ENCODE measurements at regions of chr5 and their contacts with region 1.

Region 1: GRCh38 chr5:67149951-67150523 is 46.6 kb downstream of the CD180 start:
- DNase-seq: no peak
- ATAC-seq: peak in 1 of 2 experiments; percentile 63; a peak in 2 of 6 replicates
- H3K4me3 ChIP-seq: no peak overlapping the region
- H3K27ac ChIP-seq: no peak overlapping the region
- H3K4me1 ChIP-seq: no peaks in the 10 kb centered on the region
- CTCF ChIP-seq: peak; percentile 59
- EP300 ChIP-seq: no peak
- POLR2A ChIP-seq: no peak
- RAD21 ChIP-seq: peak; percentile 70 to 78

Region 2: GRCh38 chr5:66807743-66808142 is 342.3 kb before region 1 on chr5:
- CTCF ChIA-PET with region 1: interaction called, 31 read pairs
- POLR2A ChIA-PET with region 1: no interaction called
- DNase-seq: peak; percentile 66 to 73
- ATAC-seq: peak; percentile 98
- H3K4me3 ChIP-seq: no peak overlapping the region
- H3K27ac ChIP-seq: peak overlapping the region in 1 of 2 experiments; percentile 65; a peak in 4 of 6 replicates
- H3K4me1 ChIP-seq: peaks cover 5% of the 10 kb centered on the region
- CTCF ChIP-seq: peak; percentile 78
- EP300 ChIP-seq: no peak
- POLR2A ChIP-seq: no peak
- RAD21 ChIP-seq: peak; percentile 87 to 88

Region 3: DNA sequence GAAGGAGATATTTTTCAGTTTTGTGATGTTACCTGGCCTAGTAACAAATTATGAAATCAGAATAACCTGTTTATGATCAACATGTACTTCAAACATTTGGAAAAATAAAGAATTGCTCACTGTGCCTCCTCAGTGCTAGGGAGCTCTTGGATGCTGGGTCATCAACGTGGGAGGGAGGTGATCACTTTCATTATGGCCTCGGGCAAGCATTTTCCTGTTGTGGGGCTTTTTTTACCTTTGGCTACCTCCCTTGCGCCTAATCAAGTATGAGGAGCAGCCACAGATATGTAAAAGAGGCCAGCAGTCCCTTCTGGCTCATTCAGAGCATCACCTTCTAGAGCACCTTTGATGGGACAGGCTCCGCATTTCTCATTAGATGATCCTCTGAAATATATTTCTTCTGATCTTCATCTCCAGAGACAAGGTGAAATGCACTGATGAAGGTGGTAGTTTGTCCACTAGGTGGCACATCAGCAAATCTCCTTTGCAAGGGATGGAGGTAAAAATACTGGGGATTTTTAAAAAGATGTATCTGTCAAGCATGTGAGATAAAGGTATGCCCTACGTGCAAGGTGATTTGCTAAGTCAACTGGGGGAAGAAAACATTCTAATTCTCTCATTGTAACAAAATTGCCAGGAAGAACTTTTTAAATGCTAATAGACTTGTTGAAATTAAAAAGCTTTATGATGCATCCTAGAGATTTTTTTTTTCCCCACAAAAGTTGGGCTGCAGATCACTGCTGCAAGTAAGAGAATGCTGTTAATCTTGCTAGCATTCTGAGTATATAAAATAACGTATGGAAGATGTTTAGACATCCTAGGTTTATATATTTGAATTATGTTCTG is 335.7 kb before region 1 on chr5:
- CTCF ChIA-PET with region 1: interaction called, 23 read pairs
- POLR2A ChIA-PET with region 1: no interaction called
- DNase-seq: peak; percentile 59 to 66
- ATAC-seq: peak; percentile 85 to 90; a peak in 5 of 6 replicates
- H3K4me3 ChIP-seq: no peak overlapping the region
- H3K27ac ChIP-seq: peak overlapping the region in 1 of 2 experiments; percentile 34; a peak in 1 of 6 replicates
- H3K4me1 ChIP-seq: peaks cover 8% of the 10 kb centered on the region; the same call in 2 of the 3 replicates
- CTCF ChIP-seq: peak; percentile 90
- EP300 ChIP-seq: no peak
- POLR2A ChIP-seq: no peak
- RAD21 ChIP-seq: peak; percentile 73

Region 4: GRCh38 chr5:66821688-66822429 is 328.2 kb before region 1 on chr5:
- CTCF ChIA-PET with region 1: interaction called, 10 read pairs
- POLR2A ChIA-PET with region 1: no interaction called
- DNase-seq: no peak
- ATAC-seq: no peak; a peak in 1 of 6 replicates
- H3K4me3 ChIP-seq: no peak overlapping the region
- H3K27ac ChIP-seq: no peak overlapping the region
- H3K4me1 ChIP-seq: no peaks in the 10 kb centered on the region
- CTCF ChIP-seq: no peak
- EP300 ChIP-seq: no peak
- POLR2A ChIP-seq: no peak
- RAD21 ChIP-seq: no peak

Region 5: DNA sequence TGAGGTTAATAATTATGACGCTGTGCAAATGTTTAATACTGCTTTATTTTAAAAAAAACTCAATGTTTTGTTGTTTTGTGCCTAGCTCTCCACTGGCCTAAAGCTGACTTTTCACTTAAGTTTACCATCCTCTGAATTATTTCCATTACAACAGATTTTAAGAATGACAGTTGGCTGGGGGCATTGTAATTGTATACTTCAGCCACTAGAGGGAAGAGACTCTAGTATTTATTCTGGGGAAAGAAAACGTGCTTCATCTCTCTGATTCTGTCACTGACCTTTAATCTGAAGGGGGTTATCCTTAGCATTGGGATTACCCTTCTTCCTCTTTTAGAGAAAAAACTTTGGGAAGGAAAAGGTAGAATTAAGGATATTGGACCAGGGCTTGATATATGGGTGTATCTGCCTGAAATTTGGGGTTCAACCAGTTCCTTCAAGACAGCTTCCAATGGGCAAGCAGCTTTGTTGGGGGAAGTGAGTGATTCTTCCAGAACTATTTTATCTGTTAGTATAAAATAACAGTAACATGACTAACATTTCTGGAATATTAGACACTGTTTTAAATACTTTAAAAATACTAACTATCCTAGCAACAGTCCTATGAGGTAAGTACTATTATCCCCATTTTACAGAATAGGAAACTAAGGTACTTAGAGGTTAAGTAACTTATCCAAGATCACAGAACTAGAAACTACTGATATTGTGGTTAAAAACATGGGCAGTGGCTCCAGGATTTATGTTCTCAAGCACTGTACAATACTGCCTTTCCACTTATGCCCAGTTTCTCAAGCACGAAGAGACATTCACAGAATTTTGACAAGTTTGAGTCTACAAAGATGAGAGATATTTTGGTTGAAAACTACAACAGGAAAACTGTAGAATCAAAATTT is 161.8 kb before region 1 on chr5:
- CTCF ChIA-PET with region 1: interaction called, 29 read pairs
- POLR2A ChIA-PET with region 1: no interaction called
- DNase-seq: peak; percentile 36 to 40
- ATAC-seq: peak; percentile 68 to 78; a peak in 4 of 6 replicates
- H3K4me3 ChIP-seq: no peak overlapping the region
- H3K27ac ChIP-seq: no peak overlapping the region
- H3K4me1 ChIP-seq: peaks cover 42% of the 10 kb centered on the region
- CTCF ChIP-seq: peak; percentile 57
- EP300 ChIP-seq: no peak
- POLR2A ChIP-seq: no peak
- RAD21 ChIP-seq: peak; percentile 62 to 63

Region 6: DNA sequence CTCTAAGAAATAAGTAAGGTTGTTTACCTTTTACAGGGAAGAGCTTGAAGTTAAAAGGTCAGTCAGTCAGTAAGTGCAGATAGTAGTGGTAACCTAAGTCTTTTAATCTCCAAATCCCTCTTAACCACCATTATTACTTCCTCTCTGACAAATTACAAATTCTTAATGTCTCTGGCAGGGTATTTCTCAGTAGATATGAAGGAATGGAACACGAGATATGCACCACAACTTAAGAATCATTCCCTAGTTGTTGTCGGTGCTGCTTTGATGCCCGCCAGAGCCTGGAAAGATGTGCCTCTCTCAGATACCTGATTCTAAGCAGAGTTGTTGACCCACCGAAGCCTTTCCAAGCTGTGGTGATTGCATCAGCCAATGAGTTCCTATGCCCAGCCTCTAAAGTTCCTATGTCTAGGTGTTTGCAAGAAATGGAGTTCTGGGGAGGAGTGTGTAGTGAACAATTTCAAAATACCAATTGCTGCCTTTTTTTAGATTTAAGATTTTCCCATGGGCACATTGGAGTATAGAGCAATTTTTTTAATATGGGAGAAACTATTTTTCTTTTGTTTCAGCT is 31.9 kb before region 1 on chr5:
- CTCF ChIA-PET with region 1: no interaction called
- POLR2A ChIA-PET with region 1: no interaction called
- DNase-seq: no peak
- ATAC-seq: no peak
- H3K4me3 ChIP-seq: no peak overlapping the region
- H3K27ac ChIP-seq: no peak overlapping the region
- H3K4me1 ChIP-seq: no peaks in the 10 kb centered on the region
- CTCF ChIP-seq: no peak
- EP300 ChIP-seq: no peak
- POLR2A ChIP-seq: no peak
- RAD21 ChIP-seq: no peak

Region 7: GRCh38 chr5:67165526-67166459 is 15.8 kb after region 1 on chr5:
- CTCF ChIA-PET with region 1: interaction called, 32 read pairs
- POLR2A ChIA-PET with region 1: no interaction called
- DNase-seq: peak; percentile 56 to 82
- ATAC-seq: peak; percentile 93 to 97
- H3K4me3 ChIP-seq: 0 out of 3 replicates have a peak overlapping the region, but pooled peaks have one; percentile 9
- H3K27ac ChIP-seq: peak overlapping the region; percentile 71 to 85
- H3K4me1 ChIP-seq: peaks cover 24% of the 10 kb centered on the region
- CTCF ChIP-seq: peak; percentile 77
- EP300 ChIP-seq: no peak
- POLR2A ChIP-seq: no peak
- RAD21 ChIP-seq: peak; percentile 66 to 71